Mammary epithelial cell (primary cell): ENCODE measurements at regions of chr12 and their contacts with region 1.

Region 1: GRCh38 chr12:11228296-11228879 is 41.1 kb downstream of the PRB3 start:
- DNase-seq: peak; percentile 39
- H3K4me3 ChIP-seq: no peak overlapping the region
- H3K27ac ChIP-seq: no peak overlapping the region
- H3K4me1 ChIP-seq: no peaks in the 10 kb centered on the region
- H3K27me3 ChIP-seq: no peaks in the 10 kb centered on the region
- CTCF ChIP-seq: peak; percentile 91 to 93

Region 2: DNA sequence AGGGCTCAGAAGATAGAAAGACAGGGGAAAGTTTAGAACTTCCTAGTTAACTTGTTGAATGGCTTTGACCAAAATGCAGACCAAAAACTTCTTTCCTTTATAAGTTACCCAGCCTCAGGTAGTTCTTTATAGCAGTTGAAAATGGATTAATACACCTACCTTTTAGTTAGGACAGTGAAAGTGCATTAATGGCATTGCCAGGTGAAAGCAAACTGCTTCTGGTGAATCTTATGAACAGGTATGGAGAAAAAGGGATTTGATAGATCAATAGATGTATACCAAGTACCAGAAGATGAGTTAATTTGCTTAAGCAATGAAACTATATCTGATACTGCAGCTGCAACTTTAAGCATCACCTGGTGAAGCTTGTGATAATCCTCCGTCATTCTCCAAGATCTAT is 540.3 kb before region 1 on chr12:
- CTCF ChIA-PET with region 1: no interaction called
- dilution Hi-C with region 1: no loop called
- in situ Hi-C with region 1: no loop called
- intact Hi-C with region 1: no loop called
- DNase-seq: no peak
- H3K4me3 ChIP-seq: no peak overlapping the region
- H3K27ac ChIP-seq: no peak overlapping the region
- H3K4me1 ChIP-seq: no peaks in the 10 kb centered on the region
- H3K27me3 ChIP-seq: no peaks in the 10 kb centered on the region
- CTCF ChIP-seq: no peak

Region 3: DNA sequence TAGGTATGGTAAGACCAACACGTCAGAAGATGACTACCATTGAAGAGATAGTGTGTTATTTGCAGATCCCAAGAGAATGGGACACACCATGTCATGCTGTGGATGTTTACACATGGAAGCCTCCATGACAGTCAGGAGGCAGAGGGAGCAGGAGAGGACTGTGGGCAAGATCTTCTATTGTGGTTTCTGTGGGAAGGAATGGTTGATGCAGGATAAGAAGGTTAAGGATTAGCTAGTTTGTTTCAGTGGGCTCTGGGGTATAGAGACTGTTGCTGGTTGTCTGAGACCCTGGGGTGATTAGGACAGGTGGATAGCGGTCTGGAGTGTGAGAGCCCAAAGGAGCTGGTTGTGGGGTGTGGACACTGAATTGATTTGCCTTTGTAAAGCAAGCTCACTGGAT is 449.3 kb before region 1 on chr12:
- CTCF ChIA-PET with region 1: no interaction called
- dilution Hi-C with region 1: loop called (anchors 25 kb)
- in situ Hi-C with region 1: no loop called
- intact Hi-C with region 1: no loop called
- DNase-seq: no peak
- H3K4me3 ChIP-seq: no peak overlapping the region
- H3K27ac ChIP-seq: no peak overlapping the region
- H3K4me1 ChIP-seq: no peaks in the 10 kb centered on the region
- H3K27me3 ChIP-seq: peaks cover 1% of the 10 kb centered on the region
- CTCF ChIP-seq: no peak